CD8-positive, alpha-beta T cell (primary cell): ENCODE measurements at regions of chr17 and their contacts with region 1.

Region 1: GRCh38 chr17:70544317-70544716 is 375.0 kb downstream of the KCNJ2 start:
- DNase-seq: no peak
- ATAC-seq: no peak
- H3K4me3 ChIP-seq: no peak overlapping the region
- H3K4me3 Mint-ChIP-seq: no peak overlapping the region
- H3K27ac ChIP-seq: no peak overlapping the region
- H3K27ac Mint-ChIP-seq: no peak overlapping the region
- H3K4me1 ChIP-seq: no peaks in the 10 kb centered on the region
- H3K4me1 Mint-ChIP-seq: no peaks in the 10 kb centered on the region
- H3K27me3 ChIP-seq: no peaks in the 10 kb centered on the region
- H3K27me3 Mint-ChIP-seq: no peaks in the 10 kb centered on the region
- CTCF ChIP-seq: no peak

Region 2: DNA sequence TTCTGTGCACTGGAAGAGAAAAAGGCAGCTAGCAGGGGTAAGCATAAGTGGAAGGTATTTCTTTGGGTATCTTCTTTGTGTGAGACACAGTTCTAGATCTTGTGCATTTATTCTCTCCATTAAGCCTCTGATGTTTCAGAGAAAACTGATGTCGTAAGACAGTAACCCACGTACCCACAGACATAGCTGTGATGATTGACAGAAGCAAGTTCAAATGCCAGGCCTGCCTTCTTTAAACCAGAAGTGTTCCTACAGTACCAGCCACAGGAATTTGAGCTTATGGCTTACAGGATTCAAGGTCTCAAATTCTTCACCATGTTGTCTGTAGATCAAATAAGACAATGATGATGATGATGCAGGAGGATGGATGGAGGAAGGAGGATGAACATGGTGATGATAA is 630.7 kb before region 1 on chr17:
- CTCF ChIA-PET with region 1: no interaction called
- POLR2A ChIA-PET with region 1: no interaction called
- intact Hi-C with region 1: no loop called
- DNase-seq: no peak
- ATAC-seq: no peak
- H3K4me3 ChIP-seq: no peak overlapping the region
- H3K4me3 Mint-ChIP-seq: no peak overlapping the region
- H3K27ac ChIP-seq: no peak overlapping the region
- H3K27ac Mint-ChIP-seq: no peak overlapping the region
- H3K4me1 ChIP-seq: no peaks in the 10 kb centered on the region
- H3K4me1 Mint-ChIP-seq: no peaks in the 10 kb centered on the region
- H3K27me3 ChIP-seq: no peaks in the 10 kb centered on the region
- H3K27me3 Mint-ChIP-seq: no peaks in the 10 kb centered on the region
- CTCF ChIP-seq: no peak

Region 3: GRCh38 chr17:70483624-70484023 is 60.7 kb before region 1 on chr17:
- CTCF ChIA-PET with region 1: no interaction called
- POLR2A ChIA-PET with region 1: no interaction called
- intact Hi-C with region 1: loop called in 1 of 2 experiments (anchors 10 kb)
- DNase-seq: no peak
- ATAC-seq: no peak
- H3K4me3 ChIP-seq: no peak overlapping the region
- H3K4me3 Mint-ChIP-seq: no peak overlapping the region
- H3K27ac ChIP-seq: no peak overlapping the region
- H3K27ac Mint-ChIP-seq: no peak overlapping the region
- H3K4me1 ChIP-seq: no peaks in the 10 kb centered on the region
- H3K4me1 Mint-ChIP-seq: no peaks in the 10 kb centered on the region
- H3K27me3 ChIP-seq: no peaks in the 10 kb centered on the region
- H3K27me3 Mint-ChIP-seq: no peaks in the 10 kb centered on the region
- CTCF ChIP-seq: no peak

Region 4: DNA sequence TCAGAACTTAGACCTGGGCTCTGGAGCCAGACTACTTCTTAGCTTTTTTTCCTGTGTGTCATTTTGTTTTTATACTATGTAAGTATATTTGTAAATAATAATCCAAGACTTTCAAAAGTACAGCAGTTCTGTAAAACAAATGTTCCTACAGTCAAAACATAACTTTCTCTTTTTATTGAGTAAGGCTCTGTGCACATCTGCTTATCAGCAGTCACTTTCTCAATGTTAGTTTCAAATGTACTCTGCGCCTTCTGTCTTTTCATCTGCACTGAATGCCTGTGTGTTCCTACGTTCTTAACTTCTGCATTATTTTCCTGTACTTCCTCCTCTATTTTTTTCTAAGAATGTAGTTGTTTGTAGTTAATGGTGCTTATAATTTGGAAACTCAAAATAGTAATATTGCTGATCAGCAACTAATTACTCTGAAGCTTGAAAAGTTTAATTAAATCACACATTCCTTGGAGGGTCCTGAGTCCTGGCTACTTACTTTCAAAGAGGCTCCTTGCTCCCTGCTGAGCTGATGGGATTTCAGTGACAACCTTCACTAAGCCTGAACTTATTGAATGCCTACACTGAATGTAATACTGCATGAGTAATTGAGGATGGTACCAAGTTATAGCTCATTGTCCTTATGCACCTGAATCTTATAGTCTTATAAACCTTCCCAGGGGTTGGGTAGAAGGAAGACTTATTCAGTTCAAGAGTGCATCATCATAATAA is 45.1 kb before region 1 on chr17:
- CTCF ChIA-PET with region 1: no interaction called
- POLR2A ChIA-PET with region 1: no interaction called
- intact Hi-C with region 1: no loop called
- DNase-seq: no peak
- ATAC-seq: no peak
- H3K4me3 ChIP-seq: no peak overlapping the region
- H3K4me3 Mint-ChIP-seq: no peak overlapping the region
- H3K27ac ChIP-seq: no peak overlapping the region
- H3K27ac Mint-ChIP-seq: no peak overlapping the region
- H3K4me1 ChIP-seq: no peaks in the 10 kb centered on the region
- H3K4me1 Mint-ChIP-seq: no peaks in the 10 kb centered on the region
- H3K27me3 ChIP-seq: no peaks in the 10 kb centered on the region
- H3K27me3 Mint-ChIP-seq: no peaks in the 10 kb centered on the region
- CTCF ChIP-seq: no peak